ENCODE measurements at regions of chr18 and their contacts with region 1.

Region 1: GRCh38 chr18:46250084-46250811 is 146.1 kb downstream of the HAUS1 start:
- DNase-seq: peak; percentile 71
- H3K4me3 Mint-ChIP-seq: peak overlapping the region; percentile 28
- H3K27ac Mint-ChIP-seq: peak overlapping the region; percentile 92
- H3K4me1 Mint-ChIP-seq: peaks cover 75% of the 10 kb centered on the region
- H3K27me3 Mint-ChIP-seq: no peaks in the 10 kb centered on the region

Region 2: GRCh38 chr18:46042571-46043123 is 207.6 kb before region 1 on chr18:
- intact Hi-C with region 1: no loop called
- DNase-seq: peak; percentile 21
- H3K4me3 Mint-ChIP-seq: peak overlapping the region; percentile 12
- H3K27ac Mint-ChIP-seq: peak overlapping the region; percentile 76
- H3K4me1 Mint-ChIP-seq: peaks cover 34% of the 10 kb centered on the region
- H3K27me3 Mint-ChIP-seq: no peaks in the 10 kb centered on the region

Region 3: GRCh38 chr18:46097801-46098615 is 152.2 kb before region 1 on chr18 and contains the start of gene ATP5F1A:
- intact Hi-C with region 1: loop called (anchors 1 kb)
- DNase-seq: peak; percentile 76
- H3K4me3 Mint-ChIP-seq: peak within 1 kb of the TSS; percentile 99
- H3K27ac Mint-ChIP-seq: peak within 1 kb of the TSS; percentile 99
- H3K4me1 Mint-ChIP-seq: peaks cover 23% of the 10 kb centered on the region
- H3K27me3 Mint-ChIP-seq: peaks cover 3% of the 10 kb centered on the region
- total RNA-seq, gene ATP5F1A: 412 and 420 TPM in 2 replicates

Region 4: DNA sequence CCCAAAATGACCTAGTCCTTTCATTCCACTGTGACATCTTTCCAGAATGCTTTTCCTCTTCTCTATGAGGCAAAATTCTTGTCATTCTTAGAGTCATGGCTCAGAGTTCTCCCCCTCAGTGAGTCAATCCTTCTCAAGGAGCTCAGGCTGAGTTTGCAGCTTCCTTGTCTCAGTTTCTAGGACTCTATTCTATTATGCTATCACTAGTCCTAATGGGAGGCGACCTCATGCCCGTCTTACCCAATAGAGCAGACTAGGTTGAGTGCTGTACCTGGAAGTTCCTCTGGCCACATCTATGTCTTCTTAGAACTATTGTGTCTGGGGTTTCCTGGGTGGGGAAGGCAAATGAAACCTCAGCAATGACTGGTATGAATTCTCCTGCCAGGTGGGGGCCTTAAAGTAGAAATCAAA is 94.6 kb before region 1 on chr18:
- intact Hi-C with region 1: loop called (anchors 1 kb)
- DNase-seq: peak; percentile 56
- H3K4me3 Mint-ChIP-seq: peak overlapping the region; percentile 73
- H3K27ac Mint-ChIP-seq: peak overlapping the region; percentile 92
- H3K4me1 Mint-ChIP-seq: peaks cover 58% of the 10 kb centered on the region
- H3K27me3 Mint-ChIP-seq: peaks cover 4% of the 10 kb centered on the region

Region 5: DNA sequence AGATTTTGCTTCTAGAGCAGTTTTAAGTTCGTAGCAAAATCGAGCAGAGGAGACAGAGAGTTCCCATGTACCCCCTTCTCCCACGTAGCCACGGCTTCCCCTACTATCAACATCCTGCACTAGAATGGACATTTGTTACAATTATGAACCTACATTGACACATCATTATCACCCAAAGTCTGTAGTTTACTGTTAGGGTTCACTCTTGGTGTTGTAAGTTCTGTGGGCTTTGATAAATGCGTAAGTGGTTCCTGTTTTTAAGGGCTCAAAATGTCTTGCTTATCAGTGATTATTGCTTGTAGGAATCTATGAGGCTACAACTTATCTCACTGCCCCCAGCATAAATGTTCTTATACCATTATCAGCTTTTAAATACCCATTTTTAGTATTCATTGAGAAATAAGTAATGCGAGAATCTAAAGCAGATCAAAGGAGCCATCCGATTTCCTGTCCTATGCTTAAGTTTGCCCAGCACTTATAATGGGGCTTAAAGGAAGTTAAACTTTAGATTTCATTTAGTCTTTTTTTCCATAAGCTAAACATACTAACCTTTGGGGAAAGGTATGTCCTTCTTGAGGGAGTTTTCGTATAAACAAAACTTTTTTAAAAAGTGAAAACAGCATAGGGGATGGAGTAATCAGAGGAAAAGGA is 27.4 kb before region 1 on chr18:
- intact Hi-C with region 1: loop called (anchors 1 kb)
- DNase-seq: no peak
- H3K4me3 Mint-ChIP-seq: no peak overlapping the region
- H3K27ac Mint-ChIP-seq: peak overlapping the region; percentile 56
- H3K4me1 Mint-ChIP-seq: peaks cover 60% of the 10 kb centered on the region
- H3K27me3 Mint-ChIP-seq: no peaks in the 10 kb centered on the region

Region 6: DNA sequence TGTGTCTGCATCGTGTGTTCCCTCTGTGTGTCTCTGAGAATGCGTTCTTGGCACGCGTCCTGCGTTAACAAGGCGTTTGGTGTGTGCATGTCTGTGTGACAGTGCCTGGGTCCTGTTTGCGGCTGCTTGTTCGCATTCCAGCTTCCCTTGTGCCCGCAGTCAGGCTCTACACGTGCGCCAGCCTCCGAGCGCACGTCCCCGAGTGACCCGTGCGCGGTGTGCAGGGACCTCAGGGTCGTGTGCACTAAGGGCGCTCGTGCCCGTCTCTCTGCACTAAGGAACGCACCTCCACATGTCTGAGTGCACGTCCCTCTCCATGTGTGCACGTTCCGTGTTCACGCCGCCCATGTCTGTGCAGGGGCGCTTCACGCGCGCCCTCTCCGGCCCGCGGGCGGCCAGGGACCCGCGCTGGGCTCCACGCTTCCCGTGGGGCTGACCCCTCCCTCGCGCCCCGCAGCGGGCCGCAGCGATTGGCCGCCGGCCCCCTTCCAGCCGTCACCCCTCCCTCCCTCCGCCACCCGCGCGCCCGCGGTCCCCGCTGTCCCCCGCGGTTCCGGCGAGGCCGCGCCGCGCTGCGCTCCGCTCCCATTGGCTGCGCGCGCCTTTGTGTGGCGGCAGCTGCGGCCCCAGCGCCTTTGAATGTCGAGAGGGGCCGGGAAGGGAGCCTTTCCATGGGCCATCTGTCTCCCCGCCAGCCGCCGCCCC is 83.3 kb after region 1 on chr18:
- intact Hi-C with region 1: loop called (anchors 5 kb)
- DNase-seq: peak; percentile 34
- H3K4me3 Mint-ChIP-seq: peak overlapping the region; percentile 76
- H3K27ac Mint-ChIP-seq: peak overlapping the region; percentile 2
- H3K4me1 Mint-ChIP-seq: peaks cover 39% of the 10 kb centered on the region
- H3K27me3 Mint-ChIP-seq: peaks cover 56% of the 10 kb centered on the region

Measured in activated T-helper 1 cell treated with anti-CD3 and anti-CD28 coated beads, Interleukin-12 subunit alpha, Interleukin-12 subunit beta, Interleukin-2, Interleukin-4 antibody, amounts not matched to agents 30 ng/mL and 10 ng/mL and 1 ng/mL, durations not matched to agents 14 hours and 24 hours and 36 hours (primary cell).